Esophagus squamous epithelium (tissue), 5 donors: ENCODE measurements at regions of chr1 and their contacts with region 1.

Region 1: DNA sequence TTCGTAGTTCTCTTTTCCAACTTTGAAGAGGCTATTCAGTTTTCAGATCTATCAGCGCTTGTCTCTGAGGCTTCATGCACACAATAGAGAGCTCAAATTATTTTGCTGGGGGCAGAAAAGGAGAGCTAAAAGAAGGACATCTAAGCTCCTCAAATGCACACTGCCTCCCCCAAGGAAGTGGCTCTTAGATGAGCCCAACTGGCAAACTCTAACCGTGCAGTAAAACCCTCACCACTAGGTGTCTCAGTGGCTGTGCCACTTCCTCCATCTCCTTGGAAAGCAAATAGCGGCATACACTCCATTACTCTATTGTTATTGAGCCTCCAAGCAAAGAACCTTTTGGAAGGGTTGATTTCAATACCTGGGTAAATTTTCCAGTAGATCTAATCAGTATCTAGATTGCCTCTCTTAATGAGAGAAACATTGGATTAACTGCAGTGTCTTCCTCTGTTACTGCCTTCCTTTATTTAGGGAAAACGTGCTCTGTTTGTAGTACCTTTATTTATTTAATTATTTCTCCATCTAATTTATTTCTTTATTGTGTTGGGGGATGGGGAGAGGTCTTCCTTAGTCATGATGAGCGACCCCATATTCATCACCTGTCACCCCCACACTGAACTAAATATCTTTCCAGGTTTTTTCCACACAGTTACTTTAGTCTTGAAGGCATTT is 9.2 kb upstream of the SFPQ start:
- DNase-seq: no peak
- H3K4me3 ChIP-seq: no peak overlapping the region
- H3K27ac ChIP-seq: no peak overlapping the region
- H3K4me1 ChIP-seq: peaks cover 0 to 9% (median 0%) of the 10 kb centered on the region in 3 donors
- H3K27me3 ChIP-seq: no peaks in the 10 kb centered on the region
- CTCF ChIP-seq: peak; percentile 73 to 87 (median 83)
- POLR2A ChIP-seq: no peak

Region 2: DNA sequence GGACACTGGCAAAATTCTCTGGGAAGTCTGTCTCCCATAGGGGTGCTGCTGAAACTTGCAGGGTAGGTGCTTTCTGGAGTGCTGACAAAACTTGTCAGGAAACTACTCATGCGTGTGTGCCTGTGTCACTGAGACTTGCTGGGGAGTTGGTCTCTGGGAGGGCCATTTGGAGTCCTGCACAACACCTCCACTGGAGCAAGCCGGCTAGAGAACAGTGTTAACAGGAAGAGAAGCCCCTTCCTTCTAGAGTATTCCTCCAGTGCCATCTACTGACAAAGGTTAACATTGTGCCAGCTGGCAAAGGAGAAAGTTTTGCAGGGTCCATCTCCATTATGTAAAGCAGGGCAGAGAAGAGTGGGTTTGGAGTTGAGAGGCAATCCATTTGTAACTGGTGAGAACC is 96.3 kb after region 1 on chr1:
- intact Hi-C with region 1: loop called (anchors 10 kb)
- DNase-seq: no peak
- H3K4me3 ChIP-seq: no peak overlapping the region
- H3K27ac ChIP-seq: no peak overlapping the region
- H3K4me1 ChIP-seq: peaks cover 0 to 13% (median 7%) of the 10 kb centered on the region in 3 donors
- H3K27me3 ChIP-seq: no peaks in the 10 kb centered on the region
- CTCF ChIP-seq: peak in 5 of 6 experiments; percentile 20 to 43 (median 36)
- POLR2A ChIP-seq: no peak